Lower leg skin (tissue), 4 donors: ENCODE measurements at regions of chr7 and their contacts with region 1.

Region 1: GRCh38 chr7:57201021-57201894 is 69.0 kb upstream of the ZNF479 start:
- DNase-seq: peak in 1 of 2 donors; percentile 66
- H3K4me3 ChIP-seq: no peak overlapping the region
- CTCF ChIP-seq: no peak
- POLR2A ChIP-seq: no peak

Region 2: DNA sequence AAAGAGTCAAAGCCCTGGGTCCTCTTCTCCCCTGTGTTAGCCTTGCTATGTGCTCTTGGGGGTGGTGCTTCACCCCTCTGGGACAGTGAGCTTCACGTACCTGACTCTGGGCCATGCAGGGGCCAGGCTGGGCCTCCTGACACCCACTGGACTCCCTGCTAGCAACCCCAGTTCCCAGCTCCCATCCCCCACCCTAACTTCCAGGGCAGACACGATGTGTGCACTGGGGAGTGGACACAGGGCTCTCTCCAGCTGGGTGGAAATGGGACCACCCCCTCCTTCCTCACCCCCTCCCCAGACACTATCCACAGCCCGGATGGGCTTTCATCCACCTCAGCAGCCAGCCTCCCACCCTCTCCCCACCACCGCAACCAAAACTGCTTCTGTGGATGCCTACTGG is 43.9 kb after region 1 on chr7:
- intact Hi-C with region 1: no loop called
- DNase-seq: no peak
- H3K4me3 ChIP-seq: no peak overlapping the region
- CTCF ChIP-seq: no peak
- POLR2A ChIP-seq: no peak

Region 3: GRCh38 chr7:57274535-57275283 is 73.5 kb after region 1 on chr7:
- intact Hi-C with region 1: loop called (anchors 2 kb)
- DNase-seq: no peak
- H3K4me3 ChIP-seq: no peak overlapping the region
- CTCF ChIP-seq: no peak
- POLR2A ChIP-seq: no peak